Endothelial cell of umbilical vein (primary cell): ENCODE measurements at regions of chr12 and their contacts with region 1.

Region 1: GRCh38 chr12:124767066-124767821 is 96.4 kb downstream of the SCARB1 start:
- DNase-seq: peak; percentile 58
- H3K4me3 ChIP-seq: no peak overlapping the region
- H3K27ac ChIP-seq: no peak overlapping the region
- H3K4me1 ChIP-seq: no peaks in the 10 kb centered on the region
- H3K27me3 ChIP-seq: no peaks in the 10 kb centered on the region
- CTCF ChIP-seq: peak; percentile 95 to 96
- POLR2A ChIP-seq: no peak

Region 2: DNA sequence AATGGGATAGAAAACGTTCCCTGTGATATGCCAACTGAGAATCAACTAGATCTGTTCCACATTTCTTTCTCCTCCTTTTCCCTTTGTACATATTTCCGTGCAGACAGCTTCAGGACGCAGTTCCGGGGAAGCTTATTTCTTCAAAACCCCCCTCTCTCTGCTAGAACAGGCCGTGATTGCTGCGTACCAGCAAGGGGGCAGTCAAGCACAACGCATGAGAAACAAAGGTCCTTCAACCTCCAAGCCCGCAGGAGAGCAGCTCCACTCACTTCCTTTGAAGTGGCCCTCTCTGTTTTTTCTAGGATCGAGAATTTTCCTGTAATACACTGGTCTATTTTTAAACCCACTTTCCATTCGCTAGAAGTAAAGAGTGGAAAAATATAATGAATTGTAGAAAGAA is 713.4 kb before region 1 on chr12:
- CTCF ChIA-PET with region 1: interaction called, 15 read pairs
- POLR2A ChIA-PET with region 1: no interaction called
- dilution Hi-C with region 1: no loop called
- intact Hi-C with region 1: loop called (anchors 1 kb)
- DNase-seq: peak; percentile 92
- H3K4me3 ChIP-seq: no peak overlapping the region
- H3K27ac ChIP-seq: peak overlapping the region; percentile 46
- H3K4me1 ChIP-seq: peaks cover 8% of the 10 kb centered on the region
- H3K27me3 ChIP-seq: no peaks in the 10 kb centered on the region
- CTCF ChIP-seq: peak; percentile 82 to 92
- POLR2A ChIP-seq: no peak

Region 3: GRCh38 chr12:124352839-124353238 is 414.4 kb before region 1 on chr12:
- CTCF ChIA-PET with region 1: interaction called, 13 read pairs
- POLR2A ChIA-PET with region 1: no interaction called
- dilution Hi-C with region 1: no loop called
- intact Hi-C with region 1: loop called (anchors 2 kb)
- DNase-seq: peak; percentile 42
- H3K4me3 ChIP-seq: no peak overlapping the region
- H3K27ac ChIP-seq: no peak overlapping the region
- H3K4me1 ChIP-seq: peaks cover 6% of the 10 kb centered on the region
- H3K27me3 ChIP-seq: no peaks in the 10 kb centered on the region
- CTCF ChIP-seq: no peak
- POLR2A ChIP-seq: no peak

Region 4: DNA sequence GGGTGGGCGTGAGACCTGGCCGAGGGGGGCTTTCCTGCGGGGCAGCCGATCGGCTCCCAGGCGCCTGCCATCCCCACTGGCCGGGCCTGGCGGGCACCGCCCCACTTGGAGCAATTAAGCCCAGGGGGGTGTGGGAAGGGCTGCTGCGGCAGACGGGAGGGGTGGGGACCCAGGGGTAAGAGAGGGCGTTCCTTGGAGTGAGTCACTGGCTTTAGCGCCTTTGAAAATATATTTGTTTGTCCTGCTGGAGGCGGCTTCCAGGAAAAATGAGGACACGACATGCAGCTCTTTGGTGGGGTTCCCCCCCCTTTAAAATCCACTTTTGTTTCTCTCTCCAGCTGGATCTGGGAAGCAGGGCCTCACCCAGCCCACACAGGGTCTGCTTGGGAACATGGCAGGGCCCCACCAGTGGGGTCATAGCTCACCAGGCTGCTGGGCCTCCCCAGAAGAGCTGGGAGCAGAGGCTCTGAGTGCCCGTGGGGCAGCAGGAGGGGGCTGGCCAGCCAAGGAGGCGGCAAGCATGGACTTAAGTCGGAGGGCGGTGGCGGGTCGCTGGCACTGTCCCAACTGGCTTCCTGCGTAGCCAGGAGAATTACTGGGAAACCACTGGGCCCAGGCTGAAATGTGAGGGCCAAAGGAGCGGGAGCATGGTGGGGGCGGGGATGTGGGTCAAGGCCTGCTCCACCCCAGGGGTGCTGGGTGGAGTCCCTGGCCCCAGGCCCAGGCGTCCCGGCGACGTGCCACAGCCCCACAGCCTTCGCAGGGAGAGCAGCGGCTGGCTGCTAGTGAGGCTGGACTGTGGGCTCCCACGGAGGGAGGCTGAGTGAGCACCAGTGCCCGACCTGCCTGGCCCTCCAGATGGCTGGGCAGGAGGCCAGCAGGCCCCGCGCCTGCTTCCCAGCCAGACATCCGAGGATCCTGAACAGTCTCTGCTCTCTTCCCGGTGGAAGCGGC is 344.4 kb before region 1 on chr12:
- CTCF ChIA-PET with region 1: interaction called, 3 read pairs
- POLR2A ChIA-PET with region 1: no interaction called
- dilution Hi-C with region 1: no loop called
- intact Hi-C with region 1: loop called (anchors 1 kb)
- DNase-seq: peak; percentile 90
- H3K4me3 ChIP-seq: no peak overlapping the region
- H3K27ac ChIP-seq: peak overlapping the region; percentile 98
- H3K4me1 ChIP-seq: peaks cover 28% of the 10 kb centered on the region
- H3K27me3 ChIP-seq: no peaks in the 10 kb centered on the region
- CTCF ChIP-seq: no peak
- POLR2A ChIP-seq: peak; percentile 40

Region 5: DNA sequence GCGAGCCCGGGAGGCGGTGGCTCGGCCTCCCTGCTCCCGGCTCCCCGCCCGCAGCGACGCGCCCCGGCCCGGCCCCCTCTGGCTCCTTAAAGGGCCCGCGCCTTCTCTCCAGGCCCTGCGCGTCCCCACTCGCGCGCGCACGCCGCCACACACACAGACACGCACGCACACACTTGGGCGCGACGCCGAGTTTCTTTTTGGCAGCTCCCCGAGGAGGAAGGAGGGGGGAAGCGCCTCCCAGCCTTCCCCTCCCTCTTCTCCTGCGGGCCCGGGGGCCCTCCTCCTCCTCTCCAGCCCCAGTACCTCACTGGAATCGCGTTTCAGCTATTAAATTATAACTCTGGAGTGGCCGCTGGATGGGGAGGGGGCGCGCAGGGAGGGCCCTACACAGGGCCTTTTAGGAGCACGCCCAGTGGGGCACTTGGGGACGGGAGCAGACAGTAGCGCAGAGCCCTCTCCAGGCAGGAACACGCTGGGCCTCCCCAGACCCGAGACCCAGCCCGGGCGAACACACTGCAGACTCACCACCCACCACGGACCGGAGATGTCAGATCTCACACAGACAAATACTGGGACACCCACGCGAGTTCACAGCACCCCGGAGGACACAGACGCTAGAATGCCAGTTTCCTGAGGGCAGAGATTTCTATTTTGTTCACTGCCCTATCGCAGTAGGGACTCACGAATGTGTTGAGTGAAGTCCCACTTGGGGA is 199.4 kb before region 1 on chr12:
- CTCF ChIA-PET with region 1: interaction called, 5 read pairs
- POLR2A ChIA-PET with region 1: no interaction called
- dilution Hi-C with region 1: no loop called
- intact Hi-C with region 1: loop called (anchors 1 kb)
- DNase-seq: peak; percentile 70
- H3K4me3 ChIP-seq: peak overlapping the region; percentile 35 to 86 (median 45)
- H3K27ac ChIP-seq: peak overlapping the region; percentile 43
- H3K4me1 ChIP-seq: peaks cover 10% of the 10 kb centered on the region
- H3K27me3 ChIP-seq: no peaks in the 10 kb centered on the region
- CTCF ChIP-seq: peak in 1 of 2 donors; percentile 12
- POLR2A ChIP-seq: no peak

Region 6: GRCh38 chr12:124713436-124714082 is 53.7 kb before region 1 on chr12:
- CTCF ChIA-PET with region 1: interaction called, 4 read pairs
- POLR2A ChIA-PET with region 1: no interaction called
- dilution Hi-C with region 1: no loop called
- intact Hi-C with region 1: loop called (anchors 1 kb)
- DNase-seq: peak; percentile 96
- H3K4me3 ChIP-seq: peak overlapping the region in 1 of 3 experiments; percentile 9
- H3K27ac ChIP-seq: peak overlapping the region; percentile 94
- H3K4me1 ChIP-seq: peaks cover 24% of the 10 kb centered on the region
- H3K27me3 ChIP-seq: no peaks in the 10 kb centered on the region
- CTCF ChIP-seq: no peak
- POLR2A ChIP-seq: peak; percentile 35

Region 7: DNA sequence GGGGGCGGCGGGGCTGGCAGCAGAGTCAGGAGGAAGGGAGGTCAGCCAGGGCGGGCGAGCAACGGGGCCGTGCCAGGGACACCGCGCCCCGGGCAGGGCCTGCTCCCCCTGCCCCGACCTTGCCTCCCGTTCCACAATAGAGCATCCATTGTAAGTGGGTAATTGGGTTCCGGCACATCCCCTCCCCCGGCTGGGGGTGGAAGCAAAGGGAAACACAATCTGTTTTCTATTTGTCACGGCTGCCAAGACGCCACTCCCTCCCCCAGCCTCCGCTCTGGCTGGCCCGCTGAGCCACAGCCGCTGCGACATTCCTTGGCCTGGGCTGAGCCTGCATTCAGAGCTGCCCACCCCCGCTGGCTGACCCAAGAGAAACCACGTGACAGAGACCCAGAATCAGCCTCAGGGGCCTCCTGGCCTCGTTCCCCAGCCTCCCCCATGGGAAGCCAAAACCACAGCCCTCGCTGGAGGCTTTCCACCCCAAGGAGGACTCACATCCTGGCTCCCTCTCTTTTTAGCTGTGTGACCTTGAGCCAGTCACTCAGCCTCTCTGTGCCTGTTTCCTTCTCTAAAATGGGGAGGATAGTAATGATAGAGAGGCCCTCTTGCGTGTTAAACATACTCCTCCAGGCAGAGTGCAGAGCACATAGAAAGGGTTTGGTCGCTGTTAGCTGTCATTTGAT is 21.2 kb before region 1 on chr12:
- CTCF ChIA-PET with region 1: interaction called, 17 read pairs
- POLR2A ChIA-PET with region 1: no interaction called
- dilution Hi-C with region 1: no loop called
- intact Hi-C with region 1: loop called (anchors 1 kb)
- DNase-seq: peak; percentile 94
- H3K4me3 ChIP-seq: no peak overlapping the region
- H3K27ac ChIP-seq: peak overlapping the region; percentile 78
- H3K4me1 ChIP-seq: peaks cover 31% of the 10 kb centered on the region
- H3K27me3 ChIP-seq: no peaks in the 10 kb centered on the region
- CTCF ChIP-seq: no peak
- POLR2A ChIP-seq: peak; percentile 45